ENCODE measurements at regions of chr12 and their contacts with region 1.

Region 1: DNA sequence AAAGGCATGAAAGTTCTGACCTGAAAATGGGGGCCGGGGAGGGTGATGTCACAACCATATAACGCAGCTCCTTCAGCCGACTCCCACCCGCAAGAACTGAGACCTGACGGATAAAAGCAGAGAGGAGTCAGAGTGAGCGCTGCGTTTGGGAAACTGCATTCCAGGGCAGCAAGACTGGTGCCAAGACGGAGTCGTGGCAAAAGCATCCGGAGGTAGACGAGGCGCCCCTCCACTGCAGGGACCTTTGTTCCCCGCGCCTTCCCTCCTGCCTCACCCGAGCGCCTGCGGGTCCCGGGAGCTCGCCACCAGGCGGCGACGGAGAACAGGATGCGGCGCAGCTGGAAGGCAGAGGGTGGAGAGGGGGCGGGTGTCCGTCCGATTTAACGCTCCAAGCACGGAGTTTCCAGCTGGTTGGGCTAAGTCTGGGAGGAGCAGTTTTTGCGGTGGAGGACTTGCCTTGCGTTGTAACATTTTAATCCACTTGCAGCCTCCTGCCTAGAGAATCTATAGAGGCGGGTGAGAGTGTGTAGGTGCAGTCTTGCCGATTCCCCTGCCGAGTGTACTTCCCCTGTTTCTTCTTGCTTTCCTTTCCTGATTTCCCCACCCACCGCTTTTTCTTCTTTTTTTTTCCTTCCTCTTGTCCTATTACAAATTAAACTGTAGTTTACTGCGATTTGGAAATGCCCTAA is 1.2 kb upstream of the CPNE8 start:
- ATAC-seq: peak; percentile 47 to 88 (median 80)
- H3K4me3 ChIP-seq: peak overlapping the region; percentile 44 to 57 (median 51)
- H3K27ac ChIP-seq: peak overlapping the region in 1 of 2 donors; percentile 18
- H3K4me1 ChIP-seq: no peaks in the 10 kb centered on the region

Region 2: GRCh38 chr12:38332814-38333213 is 573.8 kb before region 1 on chr12:
- in situ Hi-C with region 1: loop called in 2 of 9 experiments (anchors 25 kb)
- ATAC-seq: no peak
- H3K4me3 ChIP-seq: no peak overlapping the region
- H3K27ac ChIP-seq: no peak overlapping the region
- H3K4me1 ChIP-seq: no peaks in the 10 kb centered on the region

Region 3: GRCh38 chr12:38490941-38491340 is 415.7 kb before region 1 on chr12:
- in situ Hi-C with region 1: loop called in 1 of 9 experiments (anchors 25 kb)
- ATAC-seq: no peak
- H3K4me3 ChIP-seq: no peak overlapping the region
- H3K27ac ChIP-seq: no peak overlapping the region
- H3K4me1 ChIP-seq: peaks cover 0 to 9% of the 10 kb centered on the region in 2 donors

Region 4: GRCh38 chr12:38638406-38638805 is 268.2 kb before region 1 on chr12:
- in situ Hi-C with region 1: loop called in 1 of 9 experiments (anchors 25 kb)
- ATAC-seq: no peak
- H3K4me3 ChIP-seq: no peak overlapping the region
- H3K27ac ChIP-seq: no peak overlapping the region
- H3K4me1 ChIP-seq: peaks cover 0 to 2% of the 10 kb centered on the region in 2 donors

Region 5: DNA sequence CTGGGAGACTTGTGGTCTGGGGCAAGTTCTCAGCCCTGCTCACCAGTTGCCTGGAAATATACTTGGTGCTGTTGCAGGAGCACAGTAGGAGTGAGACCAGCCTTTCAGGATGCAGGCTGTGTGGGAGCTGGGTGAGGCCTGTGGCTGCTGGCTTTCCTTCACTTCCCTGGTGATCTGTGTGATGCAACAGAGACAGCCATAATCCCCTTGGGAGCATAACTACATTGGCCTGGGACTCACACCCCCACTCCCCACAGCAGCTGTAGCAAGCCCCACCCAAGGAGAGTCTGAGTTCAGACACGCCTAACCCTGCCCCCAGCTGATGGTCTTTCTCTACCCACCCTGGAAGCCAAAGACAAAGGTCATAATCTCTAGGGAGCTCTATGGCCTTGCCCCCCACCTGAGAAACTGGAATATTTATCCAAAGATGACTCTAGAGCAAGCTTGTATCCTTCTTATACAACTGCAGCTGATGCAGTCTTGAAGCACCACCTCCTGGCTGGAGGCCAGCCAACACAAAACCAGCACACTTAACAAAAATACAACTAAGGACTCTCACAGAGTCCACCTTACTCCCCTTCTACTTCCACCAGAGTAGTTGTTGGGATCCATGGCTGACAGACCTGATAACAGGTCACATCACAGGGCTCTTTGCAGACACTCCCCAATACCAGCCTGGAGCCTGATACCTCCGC is 189.2 kb after region 1 on chr12:
- in situ Hi-C with region 1: loop called in 5 of 9 experiments (anchors 10 to 25 kb)
- ATAC-seq: peak in 2 of 8 experiments; percentile 44 to 53
- H3K4me3 ChIP-seq: no peak overlapping the region
- H3K27ac ChIP-seq: no peak overlapping the region
- H3K4me1 ChIP-seq: no peaks in the 10 kb centered on the region

Region 6: GRCh38 chr12:39103552-39104165 is 197.0 kb after region 1 on chr12:
- in situ Hi-C with region 1: loop called in 5 of 9 experiments (anchors 10 to 25 kb)
- ATAC-seq: peak; percentile 74 to 98 (median 88)
- H3K4me3 ChIP-seq: no peak overlapping the region
- H3K27ac ChIP-seq: no peak overlapping the region
- H3K4me1 ChIP-seq: no peaks in the 10 kb centered on the region

Region 7: DNA sequence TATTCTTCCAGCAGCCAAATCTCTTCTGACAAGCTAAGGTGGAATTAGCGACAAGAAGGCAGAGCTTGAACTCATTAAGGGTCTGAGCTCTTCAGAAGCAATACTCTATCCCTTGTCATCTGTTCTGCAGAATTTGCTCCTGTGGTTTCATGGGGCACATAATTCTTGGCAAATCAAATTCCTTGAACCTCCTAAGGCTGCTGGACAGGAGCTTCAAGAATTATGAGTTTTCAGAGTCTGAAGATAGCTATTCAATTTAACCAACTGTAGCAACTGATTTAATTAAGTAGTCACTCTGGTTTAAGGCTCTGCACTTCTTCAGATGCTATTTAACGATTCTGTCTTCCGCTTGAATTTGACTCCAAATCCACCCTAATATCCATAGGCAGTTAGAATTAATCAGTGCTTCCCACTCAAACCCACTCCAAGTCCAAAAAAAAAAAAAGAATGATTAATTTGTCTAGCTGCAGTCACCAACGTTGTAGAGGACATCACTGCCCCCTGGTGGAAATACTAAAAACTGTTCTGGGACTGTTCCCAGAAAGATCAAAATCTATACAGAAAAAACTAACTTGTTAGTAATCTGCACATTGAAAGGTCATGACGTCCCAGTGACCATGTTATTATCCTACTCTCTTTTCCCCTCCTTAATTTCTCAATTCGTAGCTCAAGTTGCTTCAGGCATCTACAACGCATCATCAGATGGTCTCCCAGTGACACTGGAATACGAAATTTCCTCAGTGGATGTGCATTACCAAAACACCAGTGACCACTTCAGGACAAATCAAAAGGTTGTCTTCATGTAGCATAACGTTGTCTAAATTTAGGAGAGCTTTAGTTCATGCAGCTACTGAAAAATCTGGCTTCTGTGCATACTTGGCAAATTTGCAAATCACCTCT is 366.5 kb after region 1 on chr12:
- in situ Hi-C with region 1: loop called in 3 of 9 experiments (anchors 10 to 25 kb)
- ATAC-seq: peak; percentile 25 to 87 (median 58)
- H3K4me3 ChIP-seq: no peak overlapping the region
- H3K27ac ChIP-seq: no peak overlapping the region
- H3K4me1 ChIP-seq: peaks cover 5 to 7% of the 10 kb centered on the region in 2 donors

Region 8: GRCh38 chr12:39990122-39991101 is 1083.8 kb after region 1 on chr12:
- in situ Hi-C with region 1: no loop called
- ATAC-seq: peak in 5 of 8 experiments; percentile 45 to 95 (median 86)
- H3K4me3 ChIP-seq: no peak overlapping the region
- H3K27ac ChIP-seq: no peak overlapping the region
- H3K4me1 ChIP-seq: peaks cover 2 to 15% of the 10 kb centered on the region in 2 donors

Measured in motor neuron (in vitro differentiated cells).